ENCODE measurements at regions of chr5 and their contacts with region 1.

Region 1: GRCh38 chr5:154072414-154073171 is 33.8 kb downstream of the MFAP3 start:
- DNase-seq: peak; percentile 82
- H3K4me3 ChIP-seq: no peak overlapping the region
- H3K27ac ChIP-seq: no peak overlapping the region
- H3K4me1 ChIP-seq: no peaks in the 10 kb centered on the region
- H3K27me3 ChIP-seq: peaks cover 0 to 1% of the 10 kb centered on the region in 2 experiments
- CTCF ChIP-seq: peak; percentile 84 to 92
- POLR2A ChIP-seq: no peak

Region 2: DNA sequence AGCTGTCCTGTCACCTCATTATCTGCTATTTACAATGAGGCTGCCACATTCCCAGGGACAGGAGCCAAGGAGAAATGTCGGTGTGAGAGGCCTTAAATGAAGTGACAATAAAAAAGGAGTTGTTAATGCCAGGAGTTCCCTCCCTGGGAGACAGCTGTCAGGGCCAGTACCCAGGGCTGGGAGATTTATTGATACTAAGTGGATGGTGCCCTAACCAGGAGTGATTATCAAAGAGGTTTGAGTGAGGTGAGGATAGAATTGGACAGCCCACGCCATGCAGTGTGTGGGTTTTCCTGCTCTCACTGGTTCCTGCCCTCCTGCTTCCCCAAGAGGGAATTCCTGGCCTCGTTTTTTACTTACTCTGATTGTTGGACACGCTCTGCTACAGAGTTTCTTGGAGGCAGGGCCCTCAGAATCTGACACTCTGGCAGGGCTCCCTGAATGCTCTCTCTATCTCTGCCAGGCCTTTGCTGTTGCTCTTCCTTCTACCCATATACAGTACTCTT is 431.4 kb before region 1 on chr5:
- CTCF ChIA-PET with region 1: no interaction called
- POLR2A ChIA-PET with region 1: no interaction called
- dilution Hi-C with region 1: no loop called
- intact Hi-C with region 1: no loop called
- DNase-seq: no peak
- H3K4me3 ChIP-seq: no peak overlapping the region
- H3K27ac ChIP-seq: no peak overlapping the region
- H3K4me1 ChIP-seq: no peaks in the 10 kb centered on the region
- H3K27me3 ChIP-seq: no peaks in the 10 kb centered on the region
- CTCF ChIP-seq: no peak
- POLR2A ChIP-seq: no peak

Region 3: DNA sequence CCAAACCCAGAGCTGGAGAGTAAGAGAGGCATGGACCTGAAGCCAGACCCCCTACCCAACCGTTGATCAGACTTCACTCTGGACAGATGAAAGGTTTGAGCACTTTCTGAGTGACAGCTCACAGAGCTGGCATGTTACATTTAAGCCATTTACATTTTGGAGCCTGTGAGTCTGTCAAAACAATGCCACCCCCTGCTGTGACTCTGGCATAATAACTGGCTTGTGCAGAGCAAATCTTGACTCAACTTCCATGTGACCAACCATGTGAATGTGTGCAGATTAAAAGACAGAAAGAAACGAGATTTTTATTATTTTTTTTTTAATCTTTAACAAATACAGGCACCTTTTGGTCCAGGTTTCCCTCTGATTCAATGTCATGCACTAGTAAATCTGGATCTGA is 14.7 kb after region 1 on chr5:
- CTCF ChIA-PET with region 1: interaction called, 11 read pairs
- POLR2A ChIA-PET with region 1: no interaction called
- dilution Hi-C with region 1: no loop called
- intact Hi-C with region 1: no loop called
- DNase-seq: no peak
- H3K4me3 ChIP-seq: no peak overlapping the region
- H3K27ac ChIP-seq: no peak overlapping the region
- H3K4me1 ChIP-seq: no peaks in the 10 kb centered on the region
- H3K27me3 ChIP-seq: peaks cover 5 to 12% of the 10 kb centered on the region in 2 experiments
- CTCF ChIP-seq: no peak
- POLR2A ChIP-seq: no peak

Region 4: DNA sequence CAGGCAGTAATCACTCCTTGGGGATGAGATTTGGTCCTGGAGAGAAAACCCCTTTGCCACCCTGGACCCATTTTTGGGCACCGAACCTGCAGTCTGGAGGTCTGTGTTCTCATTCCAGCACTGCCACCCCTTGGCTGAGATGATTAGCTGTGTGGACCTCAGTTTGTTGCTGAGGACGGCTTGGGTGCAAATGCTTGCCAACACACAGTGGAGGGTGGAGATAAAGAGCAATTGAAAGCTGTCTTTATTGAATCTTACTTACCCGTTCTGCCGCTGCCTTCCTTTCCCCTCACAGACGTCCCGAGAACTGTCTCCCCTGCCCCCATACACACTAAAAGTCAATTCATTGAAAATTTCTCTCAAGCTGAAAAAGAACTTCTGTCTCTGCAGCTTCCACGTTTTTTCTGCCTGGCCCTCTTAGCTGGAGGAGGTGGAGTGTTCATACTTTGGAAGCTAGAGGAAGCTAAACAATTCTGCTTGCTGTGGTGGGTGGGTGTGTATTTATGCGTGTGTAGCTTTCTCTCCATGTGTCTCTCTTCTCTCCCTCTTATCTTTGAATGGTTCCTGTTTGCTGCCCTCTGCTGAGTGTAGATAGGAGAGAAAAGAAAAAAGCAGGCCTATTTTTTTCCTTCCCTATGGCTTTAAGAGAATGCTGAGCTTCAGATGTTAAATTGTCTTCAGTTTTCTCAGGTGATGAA is 124.5 kb after region 1 on chr5:
- CTCF ChIA-PET with region 1: interaction called, 27 read pairs
- POLR2A ChIA-PET with region 1: no interaction called
- dilution Hi-C with region 1: no loop called
- intact Hi-C with region 1: loop called (anchors 1 kb)
- DNase-seq: peak; percentile 81
- H3K4me3 ChIP-seq: no peak overlapping the region
- H3K27ac ChIP-seq: peak overlapping the region; percentile 12
- H3K4me1 ChIP-seq: peaks cover 43% of the 10 kb centered on the region
- H3K27me3 ChIP-seq: no peaks in the 10 kb centered on the region
- CTCF ChIP-seq: peak in 1 of 2 donors; percentile 26
- POLR2A ChIP-seq: no peak

Region 5: DNA sequence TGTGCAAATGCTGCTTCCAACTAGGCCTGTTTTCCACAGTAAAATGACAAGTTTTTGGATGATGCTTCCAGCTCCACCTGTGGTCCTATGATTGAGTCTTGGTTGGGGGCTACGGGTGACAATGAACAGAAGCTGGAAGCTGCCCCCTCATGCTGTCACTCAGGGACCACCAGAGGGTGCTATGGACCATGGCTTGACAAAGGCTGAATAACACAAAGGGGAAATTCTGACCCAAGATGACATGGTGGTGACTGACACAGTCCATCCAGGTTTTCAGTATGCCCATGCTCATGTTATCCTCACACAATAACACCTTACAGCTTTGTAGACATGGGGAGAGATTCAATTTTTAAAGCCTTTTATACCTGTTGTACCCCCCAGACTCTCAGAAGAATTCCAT is 349.3 kb after region 1 on chr5:
- CTCF ChIA-PET with region 1: interaction called, 11 read pairs
- POLR2A ChIA-PET with region 1: no interaction called
- dilution Hi-C with region 1: no loop called
- intact Hi-C with region 1: no loop called
- DNase-seq: peak; percentile 33
- H3K4me3 ChIP-seq: no peak overlapping the region
- H3K27ac ChIP-seq: no peak overlapping the region
- H3K4me1 ChIP-seq: no peaks in the 10 kb centered on the region
- H3K27me3 ChIP-seq: no peaks in the 10 kb centered on the region
- CTCF ChIP-seq: peak; percentile 56 to 62
- POLR2A ChIP-seq: no peak

Region 6: DNA sequence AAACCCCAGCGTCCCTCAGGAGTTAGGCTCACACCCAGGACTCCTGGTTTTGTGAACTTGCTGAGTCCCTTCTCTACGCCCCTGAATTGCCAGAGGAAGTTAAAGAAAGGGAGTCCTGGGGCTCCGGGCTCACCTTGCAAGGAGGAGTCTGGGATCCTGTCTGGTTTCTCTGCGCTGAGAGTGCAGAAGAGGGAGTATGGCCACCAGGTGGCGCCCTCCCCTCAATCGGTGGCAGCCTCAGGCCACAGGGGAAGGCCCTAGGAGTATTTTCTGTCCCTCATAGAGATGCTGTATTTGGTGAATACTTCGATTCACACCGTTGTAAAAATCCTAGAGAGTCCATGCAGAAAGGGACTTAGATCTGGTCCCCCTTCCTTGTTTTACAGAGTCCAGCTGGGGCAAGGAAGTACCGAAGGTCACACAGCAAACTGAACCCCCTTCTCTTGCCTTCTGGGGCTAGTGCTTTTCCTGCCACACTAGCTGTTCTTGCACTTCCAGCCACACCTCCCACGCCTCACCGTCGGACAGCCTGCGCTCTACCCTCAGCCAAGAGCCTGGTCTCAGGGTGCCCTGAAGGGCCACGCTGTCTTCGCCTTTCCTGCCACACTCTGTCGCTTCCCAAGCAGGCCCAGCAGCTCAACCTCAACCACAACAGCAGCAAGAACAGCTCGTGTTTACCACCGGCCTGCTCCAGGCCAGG is 395.2 kb after region 1 on chr5:
- CTCF ChIA-PET with region 1: interaction called, 11 read pairs
- POLR2A ChIA-PET with region 1: no interaction called
- dilution Hi-C with region 1: no loop called
- intact Hi-C with region 1: loop called (anchors 1 kb)
- DNase-seq: peak; percentile 56
- H3K4me3 ChIP-seq: no peak overlapping the region
- H3K27ac ChIP-seq: no peak overlapping the region
- H3K4me1 ChIP-seq: no peaks in the 10 kb centered on the region
- H3K27me3 ChIP-seq: peaks cover 31 to 35% of the 10 kb centered on the region in 2 experiments
- CTCF ChIP-seq: peak; percentile 90 to 91
- POLR2A ChIP-seq: no peak

Measured in endothelial cell of umbilical vein (primary cell).